ENCODE measurements at regions of chrX and their contacts with region 1.

Region 1: GRCh38 chrX:46268429-46268828 is 276.8 kb downstream of the ZNF674 start:
- DNase-seq: peak; percentile 92
- ATAC-seq: peak; percentile 79
- H3K4me3 ChIP-seq: no peak overlapping the region
- H3K27ac ChIP-seq: peak overlapping the region; percentile 82
- H3K4me1 ChIP-seq: peaks cover 65% of the 10 kb centered on the region
- H3K27me3 ChIP-seq: no peaks in the 10 kb centered on the region
- CTCF ChIP-seq: no peak

Region 2: GRCh38 chrX:46165411-46165810 is 103.0 kb before region 1 on chrX:
- CTCF ChIA-PET with region 1: no interaction called
- POLR2A ChIA-PET with region 1: no interaction called
- intact Hi-C with region 1: no loop called
- DNase-seq: peak; percentile 36
- ATAC-seq: no peak
- H3K4me3 ChIP-seq: no peak overlapping the region
- H3K27ac ChIP-seq: no peak overlapping the region
- H3K4me1 ChIP-seq: peaks cover 11% of the 10 kb centered on the region
- H3K27me3 ChIP-seq: no peaks in the 10 kb centered on the region
- CTCF ChIP-seq: no peak

Region 3: GRCh38 chrX:46180258-46180687 is 88.2 kb before region 1 on chrX:
- CTCF ChIA-PET with region 1: no interaction called
- POLR2A ChIA-PET with region 1: no interaction called
- intact Hi-C with region 1: loop called (anchors 5 kb)
- DNase-seq: peak; percentile 52
- ATAC-seq: no peak; the same call in 1 of the 2 replicates
- H3K4me3 ChIP-seq: no peak overlapping the region
- H3K27ac ChIP-seq: peak overlapping the region; percentile 37
- H3K4me1 ChIP-seq: peaks cover 30% of the 10 kb centered on the region
- H3K27me3 ChIP-seq: no peaks in the 10 kb centered on the region
- CTCF ChIP-seq: no peak

Region 4: GRCh38 chrX:46208225-46208854 is 60.1 kb before region 1 on chrX:
- CTCF ChIA-PET with region 1: no interaction called
- POLR2A ChIA-PET with region 1: no interaction called
- intact Hi-C with region 1: loop called (anchors 10 kb)
- DNase-seq: peak; percentile 60
- ATAC-seq: peak; percentile 33; the same call in 1 of the 2 replicates
- H3K4me3 ChIP-seq: no peak overlapping the region
- H3K27ac ChIP-seq: peak overlapping the region; percentile 70
- H3K4me1 ChIP-seq: peaks cover 44% of the 10 kb centered on the region
- H3K27me3 ChIP-seq: no peaks in the 10 kb centered on the region
- CTCF ChIP-seq: no peak

Region 5: DNA sequence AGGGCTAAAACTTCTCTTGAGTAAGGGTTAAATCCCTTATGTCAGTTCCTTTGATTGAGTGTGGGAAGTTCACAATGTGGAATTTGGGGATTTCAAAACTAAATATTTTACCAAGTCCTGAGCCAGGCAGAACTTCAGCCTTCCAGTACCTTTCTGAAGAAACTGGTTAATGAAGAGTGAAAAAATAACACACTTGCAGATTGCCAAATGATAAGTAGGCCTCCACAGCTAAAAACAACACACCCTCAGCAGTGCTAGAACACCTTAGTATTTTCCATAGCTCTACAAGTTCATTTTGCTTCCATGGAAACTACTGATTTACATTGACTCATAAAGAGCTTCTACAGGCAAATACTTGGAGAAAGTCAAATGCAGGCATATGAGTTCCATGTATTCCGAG is 50.1 kb before region 1 on chrX:
- CTCF ChIA-PET with region 1: no interaction called
- POLR2A ChIA-PET with region 1: no interaction called
- intact Hi-C with region 1: no loop called
- DNase-seq: no peak
- ATAC-seq: no peak
- H3K4me3 ChIP-seq: no peak overlapping the region
- H3K27ac ChIP-seq: no peak overlapping the region
- H3K4me1 ChIP-seq: no peaks in the 10 kb centered on the region
- H3K27me3 ChIP-seq: no peaks in the 10 kb centered on the region
- CTCF ChIP-seq: no peak

Region 6: DNA sequence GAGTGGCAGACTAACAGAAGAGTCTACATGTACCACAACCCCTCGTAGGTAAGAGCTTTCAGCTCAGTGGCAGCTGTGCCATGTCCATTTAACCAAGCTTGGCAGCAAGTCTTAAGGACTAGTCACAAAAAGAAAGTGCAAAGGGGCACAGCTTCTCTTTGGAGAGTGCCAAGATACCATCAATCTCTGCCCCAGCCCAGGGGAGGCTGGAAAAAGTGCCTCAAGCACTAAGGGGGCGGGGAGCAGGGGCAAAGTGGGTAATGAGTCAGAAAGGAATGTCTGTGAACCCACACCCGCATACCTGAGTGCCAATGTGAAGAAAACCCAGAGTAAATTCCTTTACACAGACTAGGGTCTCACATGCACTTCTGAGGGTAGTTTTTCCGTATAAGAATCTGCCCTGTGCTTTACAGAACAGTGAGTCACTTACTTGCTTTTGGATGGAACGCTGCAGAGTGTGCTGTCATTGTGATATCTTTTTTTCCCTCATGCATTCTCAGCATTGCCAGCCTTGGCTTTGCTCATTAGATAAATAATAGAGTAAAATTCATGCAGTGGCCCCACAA is 57.0 kb after region 1 on chrX:
- CTCF ChIA-PET with region 1: no interaction called
- POLR2A ChIA-PET with region 1: no interaction called
- intact Hi-C with region 1: loop called (anchors 10 kb)
- DNase-seq: peak; percentile 96
- ATAC-seq: peak; percentile 83
- H3K4me3 ChIP-seq: peak overlapping the region; percentile 64
- H3K27ac ChIP-seq: peak overlapping the region; percentile 98
- H3K4me1 ChIP-seq: peaks cover 52% of the 10 kb centered on the region
- H3K27me3 ChIP-seq: no peaks in the 10 kb centered on the region
- CTCF ChIP-seq: no peak

Region 7: DNA sequence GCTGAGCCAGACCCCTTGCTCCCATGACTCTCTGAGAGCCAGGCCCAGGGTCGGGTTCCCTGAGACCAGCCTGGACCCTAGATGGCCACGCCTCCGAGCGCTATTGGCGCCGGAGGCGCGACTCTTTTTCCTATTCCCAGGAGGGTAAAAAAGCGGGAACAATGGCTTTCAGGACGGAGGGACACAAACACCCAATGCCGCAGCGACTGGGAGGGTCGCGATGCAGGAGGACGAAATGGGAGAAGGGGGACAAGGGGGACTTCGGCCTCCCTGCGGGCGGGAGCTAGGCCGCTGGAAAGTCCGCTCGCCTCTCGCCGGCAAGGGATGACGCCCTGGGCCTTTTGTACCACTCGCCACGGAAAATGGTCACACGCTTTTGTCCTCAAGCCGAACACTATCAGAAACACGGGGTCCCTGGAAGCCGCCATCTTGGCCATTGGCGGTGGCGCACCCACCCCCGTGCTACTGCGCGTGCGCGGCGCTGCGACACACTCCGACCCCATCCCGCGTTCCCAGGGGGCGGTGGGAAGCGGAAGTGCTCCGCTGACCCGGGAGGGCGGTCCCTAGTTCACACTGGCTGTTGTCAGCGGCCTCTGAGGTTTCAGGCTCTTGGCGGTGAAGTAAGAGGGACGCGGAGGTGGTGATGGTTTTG is 178.4 kb after region 1 on chrX:
- CTCF ChIA-PET with region 1: no interaction called
- POLR2A ChIA-PET with region 1: no interaction called
- intact Hi-C with region 1: no loop called
- DNase-seq: peak; percentile 80
- ATAC-seq: peak; percentile 81
- H3K4me3 ChIP-seq: peak overlapping the region; percentile 86
- H3K27ac ChIP-seq: peak overlapping the region; percentile 69
- H3K4me1 ChIP-seq: peaks cover 25% of the 10 kb centered on the region
- H3K27me3 ChIP-seq: no peaks in the 10 kb centered on the region
- CTCF ChIP-seq: no peak